ENCODE measurements at regions of chr12 and their contacts with region 1.

Region 1: DNA sequence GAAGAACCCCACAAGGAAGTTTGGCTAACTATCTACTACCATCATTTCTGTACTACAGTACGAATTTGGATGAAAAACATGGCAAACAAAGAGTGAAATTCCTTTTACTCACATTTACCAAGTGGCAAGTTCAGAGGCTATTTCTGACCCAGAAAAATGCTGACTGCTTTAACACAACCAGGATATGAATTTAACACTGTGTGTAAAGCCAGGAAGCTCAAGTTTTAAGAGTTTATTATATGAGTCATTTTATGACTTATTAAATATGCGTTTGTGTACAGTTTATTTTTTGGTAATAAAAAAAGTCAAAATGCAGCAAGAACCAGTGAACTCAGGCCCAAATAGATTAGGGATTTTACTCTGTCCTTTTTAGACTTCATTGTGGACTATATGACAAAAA is 58.4 kb upstream of the STAC3 start:
- DNase-seq: no peak
- H3K4me3 ChIP-seq: no peak overlapping the region
- H3K27ac ChIP-seq: peak overlapping the region in 1 of 5 donors; percentile 6
- H3K4me1 ChIP-seq: no peaks in the 10 kb centered on the region
- H3K27me3 ChIP-seq: no peaks in the 10 kb centered on the region
- CTCF ChIP-seq: no peak
- EP300 ChIP-seq: no peak
- POLR2A ChIP-seq: no peak

Region 2: GRCh38 chr12:57452937-57453509 is 143.6 kb after region 1 on chr12:
- intact Hi-C with region 1: loop called (anchors 5 kb)
- DNase-seq: peak; percentile 82 to 90
- H3K4me3 ChIP-seq: no peak overlapping the region
- H3K27ac ChIP-seq: peak overlapping the region in 1 of 5 donors; percentile 52
- H3K4me1 ChIP-seq: peaks cover 0 to 18% (median 5%) of the 10 kb centered on the region in 4 donors
- H3K27me3 ChIP-seq: peaks cover 0 to 26% (median 0%) of the 10 kb centered on the region in 3 donors
- CTCF ChIP-seq: peak in 5 of 7 experiments; percentile 83 to 92 (median 90)
- EP300 ChIP-seq: no peak
- POLR2A ChIP-seq: no peak